ENCODE measurements at regions of chr22 and their contacts with region 1.

Region 1: GRCh38 chr22:17562906-17563870 is at the start of gene SLC25A18:
- DNase-seq: peak in 3 of 5 donors; percentile 52 to 66 (median 56)
- H3K4me3 ChIP-seq: no peak within 1 kb of the TSS
- H3K27ac ChIP-seq: peak within 1 kb of the TSS in 1 of 2 donors; percentile 60
- H3K4me1 ChIP-seq: peaks cover 11% of the 10 kb centered on the region
- H3K27me3 ChIP-seq: no peaks in the 10 kb centered on the region
- CTCF ChIP-seq: no peak
- EP300 ChIP-seq: peak; percentile 75
- POLR2A ChIP-seq: no peak
- total RNA-seq, gene SLC25A18: 0.41 to 2.8 (median 1.4) TPM

Region 2: DNA sequence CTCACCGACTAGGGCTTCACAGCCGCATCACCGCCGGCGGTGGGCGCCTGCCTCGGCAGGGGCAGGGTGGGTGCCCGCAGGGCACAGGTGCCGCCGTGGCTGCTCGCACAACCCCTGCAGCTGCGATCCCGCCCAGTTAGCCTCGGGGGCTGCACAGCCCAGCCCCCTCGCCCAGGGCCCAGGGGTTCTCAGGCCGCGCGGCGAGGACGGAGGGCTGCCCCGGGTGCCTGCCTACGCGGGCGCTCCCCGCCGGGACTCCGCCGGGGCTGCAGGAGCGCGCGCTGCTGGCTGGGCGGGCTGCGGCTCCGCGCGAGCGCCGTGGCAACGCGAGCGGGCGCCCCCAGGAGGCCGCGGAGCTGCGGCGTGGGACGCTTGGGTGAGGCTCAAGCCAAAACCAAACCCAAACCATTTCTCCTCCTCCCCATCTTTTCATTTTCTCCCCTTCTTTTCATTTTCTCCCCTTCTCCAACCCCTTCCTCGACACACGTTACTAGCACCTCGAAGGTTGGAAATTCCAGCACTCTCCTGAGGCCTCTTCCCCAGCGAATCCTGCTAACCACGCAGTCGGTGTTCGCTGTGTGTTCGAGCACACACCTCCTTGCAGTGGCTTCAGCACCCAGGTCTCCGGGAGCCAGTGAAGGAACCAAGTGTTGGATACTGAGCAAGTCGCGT is 461.2 kb after region 1 on chr22 and contains the start of gene MICAL3:
- intact Hi-C with region 1: loop called in 1 of 4 experiments (anchors 5 kb)
- DNase-seq: peak; percentile 50 to 80 (median 68)
- H3K4me3 ChIP-seq: peak within 1 kb of the TSS; percentile 59
- H3K27ac ChIP-seq: peak within 1 kb of the TSS; percentile 73 to 77
- H3K4me1 ChIP-seq: peaks cover 6% of the 10 kb centered on the region
- H3K27me3 ChIP-seq: no peaks in the 10 kb centered on the region
- CTCF ChIP-seq: peak; percentile 36 to 69 (median 57)
- EP300 ChIP-seq: no peak
- POLR2A ChIP-seq: no peak
- total RNA-seq, gene MICAL3: 17.5 to 106 (median 81.6) TPM

Measured in ovary (tissue), 10 donors.